ENCODE measurements at regions of chr4 and their contacts with region 1.

Region 1: GRCh38 chr4:188754372-188755002 is 615.2 kb downstream of the TRIML1 start:
- DNase-seq: no peak
- H3K4me3 ChIP-seq: no peak overlapping the region
- H3K27ac ChIP-seq: no peak overlapping the region
- H3K4me1 ChIP-seq: no peaks in the 10 kb centered on the region
- H3K27me3 ChIP-seq: no peaks in the 10 kb centered on the region
- CTCF ChIP-seq: no peak
- POLR2A ChIP-seq: no peak

Region 2: GRCh38 chr4:188305690-188306089 is 448.8 kb before region 1 on chr4:
- intact Hi-C with region 1: no loop called
- DNase-seq: no peak
- H3K4me3 ChIP-seq: no peak overlapping the region
- H3K27ac ChIP-seq: no peak overlapping the region
- H3K4me1 ChIP-seq: no peaks in the 10 kb centered on the region
- H3K27me3 ChIP-seq: no peaks in the 10 kb centered on the region
- CTCF ChIP-seq: no peak
- POLR2A ChIP-seq: no peak

Region 3: DNA sequence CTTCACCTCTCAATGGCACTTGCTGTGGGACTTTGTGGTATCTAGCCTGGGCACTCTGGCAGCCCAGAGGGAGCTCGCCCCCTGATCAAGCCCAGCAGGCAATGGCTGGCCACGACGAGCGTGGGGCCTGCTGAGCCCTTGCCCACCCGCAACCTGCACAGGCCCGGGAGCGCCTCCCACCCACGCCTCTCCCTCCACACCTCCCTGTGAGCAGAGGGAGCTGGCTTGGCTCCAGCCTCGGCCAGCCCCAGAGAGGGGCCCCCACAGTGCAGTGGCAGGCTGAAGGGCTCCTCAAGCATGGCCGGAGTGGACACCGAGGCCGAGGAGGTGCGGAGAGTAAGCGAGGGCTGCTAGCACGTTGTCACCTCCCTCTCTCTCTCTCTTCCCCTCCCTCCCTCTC is 19.4 kb before region 1 on chr4:
- intact Hi-C with region 1: loop called (anchors 2 kb)
- DNase-seq: no peak
- H3K4me3 ChIP-seq: no peak overlapping the region
- H3K27ac ChIP-seq: no peak overlapping the region
- H3K4me1 ChIP-seq: no peaks in the 10 kb centered on the region
- H3K27me3 ChIP-seq: no peaks in the 10 kb centered on the region
- CTCF ChIP-seq: no peak
- POLR2A ChIP-seq: no peak